A673 (cell line): ENCODE measurements at regions of chr18 and their contacts with region 1.

Region 1: GRCh38 chr18:25921677-25922421 is 168.6 kb downstream of the SS18 start:
- DNase-seq: peak; percentile 57
- H3K4me3 ChIP-seq: no peak overlapping the region
- H3K27ac ChIP-seq: no peak overlapping the region
- H3K4me1 ChIP-seq: no peaks in the 10 kb centered on the region
- H3K27me3 ChIP-seq: no peaks in the 10 kb centered on the region
- CTCF ChIP-seq: peak; percentile 68

Region 2: DNA sequence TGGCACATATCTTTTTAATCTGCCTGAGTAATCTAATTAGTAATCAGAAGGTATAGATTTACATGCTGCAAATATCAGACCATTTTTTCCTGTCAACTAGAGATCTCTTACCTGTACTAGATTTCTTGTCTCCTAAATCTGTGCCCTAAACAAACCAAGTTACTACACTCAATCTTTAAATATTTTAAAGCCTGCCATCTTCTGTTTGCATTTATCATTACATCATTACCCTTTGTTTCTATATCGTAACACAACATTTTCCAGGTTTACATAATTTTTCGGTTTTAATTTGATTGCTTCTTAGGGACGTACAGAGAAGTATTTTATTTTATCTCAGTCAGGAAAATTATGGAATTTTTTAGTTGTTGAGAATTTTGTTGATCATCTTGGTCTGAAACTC is 237.5 kb after region 1 on chr18:
- CTCF ChIA-PET with region 1: no interaction called
- POLR2A ChIA-PET with region 1: no interaction called
- intact Hi-C with region 1: loop called (anchors 5 kb)
- DNase-seq: peak; percentile 6
- H3K4me3 ChIP-seq: no peak overlapping the region
- H3K27ac ChIP-seq: no peak overlapping the region
- H3K4me1 ChIP-seq: no peaks in the 10 kb centered on the region
- H3K27me3 ChIP-seq: no peaks in the 10 kb centered on the region
- CTCF ChIP-seq: peak; percentile 50; the same call in 1 of the 2 replicates